CD4-positive, alpha-beta memory T cell (primary cell): ENCODE measurements at regions of chr15 and their contacts with region 1.

Region 1: DNA sequence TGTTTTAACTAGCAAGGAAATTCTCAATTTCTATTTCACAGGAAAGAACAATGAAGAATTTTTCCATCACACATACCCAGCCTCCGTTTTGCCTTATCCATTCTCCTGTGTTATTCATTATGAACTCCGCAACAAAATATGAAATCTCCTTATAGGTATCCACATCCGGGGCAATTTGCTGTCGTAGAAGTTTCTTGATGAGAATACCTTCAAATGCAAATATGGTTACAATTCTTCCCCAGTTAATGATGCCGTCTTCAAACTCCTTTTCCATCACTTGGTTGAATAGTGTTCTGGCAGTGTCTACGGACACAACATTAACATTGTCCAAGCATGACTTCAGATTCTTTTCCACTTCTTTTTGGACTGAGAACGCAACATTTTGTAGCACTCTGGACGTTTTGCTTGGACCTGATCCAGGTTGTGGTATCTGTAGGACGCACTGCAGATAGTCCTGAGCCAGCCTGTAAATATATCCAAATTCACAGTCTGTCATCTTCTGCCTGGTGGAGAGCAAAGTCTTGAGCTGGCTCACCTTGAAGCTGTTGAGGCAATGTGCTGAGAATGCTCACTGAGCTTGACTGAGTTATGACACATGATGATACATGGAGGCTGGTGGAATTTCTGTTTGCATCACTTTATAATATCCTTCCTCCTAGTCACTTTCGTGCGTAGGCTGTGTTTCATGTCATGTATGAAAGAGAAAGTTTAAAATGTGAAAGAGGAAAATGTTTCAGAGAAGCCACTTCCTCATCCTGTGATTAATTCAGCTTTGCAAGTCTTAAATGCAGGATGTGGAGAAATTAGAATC is at the start of gene BCL2A1:
- DNase-seq: peak; percentile 67 to 82 (median 77)
- H3K4me3 ChIP-seq: peak within 1 kb of the TSS; percentile 69 to 92
- H3K4me3 Mint-ChIP-seq: peak within 1 kb of the TSS; percentile 87 to 98 (median 92)
- H3K27ac ChIP-seq: peak within 1 kb of the TSS; percentile 64
- H3K27ac Mint-ChIP-seq: peak within 1 kb of the TSS; percentile 90 to 98 (median 95)
- H3K4me1 ChIP-seq: peaks cover 52% of the 10 kb centered on the region
- H3K4me1 Mint-ChIP-seq: peaks cover 38 to 63% (median 51%) of the 10 kb centered on the region in 4 donors
- H3K27me3 ChIP-seq: no peaks in the 10 kb centered on the region
- H3K27me3 Mint-ChIP-seq: no peaks in the 10 kb centered on the region
- total RNA-seq, gene BCL2A1: 25.4 to 28.5 TPM

Region 2: GRCh38 chr15:79896637-79897379 is 74.0 kb before region 1 on chr15 and contains the start of gene MTHFS:
- CTCF ChIA-PET with region 1: interaction called, 13 read pairs
- POLR2A ChIA-PET with region 1: interaction called, 84 read pairs
- intact Hi-C with region 1: loop called (anchors 1 kb)
- DNase-seq: peak; percentile 81 to 87 (median 85)
- H3K4me3 ChIP-seq: peak within 1 kb of the TSS; percentile 74 to 84
- H3K4me3 Mint-ChIP-seq: peak within 1 kb of the TSS; percentile 96 to 100 (median 100)
- H3K27ac ChIP-seq: peak within 1 kb of the TSS; percentile 88
- H3K27ac Mint-ChIP-seq: peak within 1 kb of the TSS; percentile 97 to 100 (median 99)
- H3K4me1 ChIP-seq: peaks cover 32% of the 10 kb centered on the region
- H3K4me1 Mint-ChIP-seq: peaks cover 28 to 45% (median 36%) of the 10 kb centered on the region in 4 donors
- H3K27me3 ChIP-seq: no peaks in the 10 kb centered on the region
- H3K27me3 Mint-ChIP-seq: no peaks in the 10 kb centered on the region
- total RNA-seq, gene MTHFS: 21.3 to 25.6 TPM

Region 3: GRCh38 chr15:79901958-79902357 is 68.9 kb before region 1 on chr15:
- CTCF ChIA-PET with region 1: interaction called, 13 read pairs
- POLR2A ChIA-PET with region 1: interaction called, 84 read pairs
- intact Hi-C with region 1: loop called (anchors 1 kb)
- DNase-seq: no peak
- H3K4me3 ChIP-seq: no peak overlapping the region
- H3K4me3 Mint-ChIP-seq: no peak overlapping the region
- H3K27ac ChIP-seq: no peak overlapping the region
- H3K27ac Mint-ChIP-seq: peak overlapping the region in 1 of 7 donors; percentile 15
- H3K4me1 ChIP-seq: peaks cover 10% of the 10 kb centered on the region
- H3K4me1 Mint-ChIP-seq: peaks cover 9 to 15% (median 13%) of the 10 kb centered on the region in 4 donors
- H3K27me3 ChIP-seq: no peaks in the 10 kb centered on the region
- H3K27me3 Mint-ChIP-seq: no peaks in the 10 kb centered on the region

Region 4: GRCh38 chr15:79923515-79924395 is 47.1 kb before region 1 on chr15:
- CTCF ChIA-PET with region 1: interaction called, 14 read pairs
- POLR2A ChIA-PET with region 1: interaction called, 165 read pairs
- intact Hi-C with region 1: loop called (anchors 1 kb)
- DNase-seq: peak; percentile 97 to 100 (median 99)
- H3K4me3 ChIP-seq: peak overlapping the region; percentile 88 to 91
- H3K4me3 Mint-ChIP-seq: peak overlapping the region; percentile 90 to 94 (median 92)
- H3K27ac ChIP-seq: peak overlapping the region; percentile 85
- H3K27ac Mint-ChIP-seq: peak overlapping the region; percentile 95 to 99 (median 97)
- H3K4me1 ChIP-seq: peaks cover 20% of the 10 kb centered on the region
- H3K4me1 Mint-ChIP-seq: peaks cover 10 to 31% (median 22%) of the 10 kb centered on the region in 4 donors
- H3K27me3 ChIP-seq: no peaks in the 10 kb centered on the region
- H3K27me3 Mint-ChIP-seq: no peaks in the 10 kb centered on the region

Region 5: DNA sequence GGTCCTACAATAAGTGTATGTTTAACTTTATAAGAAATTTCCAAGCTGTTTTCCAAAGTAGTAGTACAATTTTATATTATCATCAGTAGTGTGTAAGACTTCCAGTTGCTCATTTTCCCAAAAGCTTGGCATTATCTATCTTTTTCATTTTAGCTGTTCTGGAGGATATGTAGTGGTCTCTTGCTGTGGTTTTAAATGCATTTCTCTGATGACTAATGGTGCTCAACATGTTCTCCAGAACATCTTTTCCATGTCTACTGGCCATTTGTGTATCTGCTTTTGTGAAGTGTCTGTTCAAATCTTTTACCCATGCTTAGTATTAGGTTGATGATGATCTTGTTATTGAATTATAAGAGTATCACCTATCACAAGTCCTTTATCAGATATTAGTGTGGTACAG is 13.1 kb before region 1 on chr15:
- CTCF ChIA-PET with region 1: no interaction called
- POLR2A ChIA-PET with region 1: interaction called, 12 read pairs
- intact Hi-C with region 1: no loop called
- DNase-seq: no peak
- H3K4me3 ChIP-seq: no peak overlapping the region
- H3K4me3 Mint-ChIP-seq: no peak overlapping the region
- H3K27ac ChIP-seq: no peak overlapping the region
- H3K27ac Mint-ChIP-seq: no peak overlapping the region
- H3K4me1 ChIP-seq: peaks cover 16% of the 10 kb centered on the region
- H3K4me1 Mint-ChIP-seq: peaks cover 18 to 27% (median 20%) of the 10 kb centered on the region in 4 donors
- H3K27me3 ChIP-seq: no peaks in the 10 kb centered on the region
- H3K27me3 Mint-ChIP-seq: no peaks in the 10 kb centered on the region

Region 6: GRCh38 chr15:79989682-79990081 is 18.9 kb after region 1 on chr15:
- CTCF ChIA-PET with region 1: interaction called, 21 read pairs
- POLR2A ChIA-PET with region 1: interaction called, 6 read pairs
- intact Hi-C with region 1: loop called (anchors 1 kb)
- DNase-seq: no peak
- H3K4me3 ChIP-seq: no peak overlapping the region
- H3K4me3 Mint-ChIP-seq: no peak overlapping the region
- H3K27ac ChIP-seq: no peak overlapping the region
- H3K27ac Mint-ChIP-seq: peak overlapping the region in 1 of 7 donors; percentile 45
- H3K4me1 ChIP-seq: no peaks in the 10 kb centered on the region
- H3K4me1 Mint-ChIP-seq: peaks cover 0 to 5% (median 3%) of the 10 kb centered on the region in 4 donors
- H3K27me3 ChIP-seq: no peaks in the 10 kb centered on the region
- H3K27me3 Mint-ChIP-seq: no peaks in the 10 kb centered on the region

Region 7: DNA sequence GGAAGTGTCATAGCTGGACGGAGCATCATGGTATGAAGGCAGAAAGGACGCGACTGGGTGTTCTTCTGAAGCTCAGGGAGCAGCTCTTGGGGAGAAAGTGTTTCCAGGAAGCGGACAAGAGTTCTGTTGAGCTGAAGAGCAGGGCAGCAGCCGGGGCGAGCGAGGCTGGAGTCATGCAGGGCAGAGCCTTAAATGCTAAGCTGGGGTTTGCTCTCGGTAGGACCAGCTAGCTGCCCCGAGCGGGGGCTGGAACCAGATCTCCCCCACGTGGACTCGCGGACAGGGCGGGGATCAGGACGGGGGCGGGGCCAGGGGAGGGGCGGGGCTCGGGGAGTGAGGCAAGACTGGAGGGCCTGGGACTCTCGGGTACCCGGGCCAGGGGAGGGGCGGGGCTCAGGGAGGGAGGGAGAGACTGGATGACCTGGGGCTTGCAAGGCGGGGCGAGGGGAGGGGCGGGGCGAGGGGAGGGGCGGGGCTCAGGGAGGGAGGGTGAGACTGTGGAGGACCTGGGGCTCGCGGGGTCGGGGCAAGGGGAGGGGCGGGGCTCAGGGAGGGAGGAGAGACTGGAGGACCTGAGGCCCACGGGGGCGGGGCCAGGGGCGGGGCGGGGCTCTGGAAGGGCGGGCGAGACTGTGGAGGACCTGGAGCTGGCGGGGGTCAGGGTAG is 181.5 kb after region 1 on chr15:
- CTCF ChIA-PET with region 1: no interaction called
- POLR2A ChIA-PET with region 1: no interaction called
- intact Hi-C with region 1: loop called (anchors 5 kb)
- DNase-seq: peak; percentile 76 to 96 (median 80)
- H3K4me3 ChIP-seq: peak overlapping the region in 1 of 2 donors; percentile 33
- H3K4me3 Mint-ChIP-seq: peak overlapping the region; percentile 79 to 94 (median 86)
- H3K27ac ChIP-seq: peak overlapping the region; percentile 56
- H3K27ac Mint-ChIP-seq: peak overlapping the region; percentile 68 to 93 (median 88)
- H3K4me1 ChIP-seq: peaks cover 14% of the 10 kb centered on the region
- H3K4me1 Mint-ChIP-seq: peaks cover 16 to 23% (median 20%) of the 10 kb centered on the region in 4 donors
- H3K27me3 ChIP-seq: no peaks in the 10 kb centered on the region
- H3K27me3 Mint-ChIP-seq: no peaks in the 10 kb centered on the region